Vagina (tissue), 2 donors: ENCODE measurements at regions of chr2 and their contacts with region 1.

Region 1: DNA sequence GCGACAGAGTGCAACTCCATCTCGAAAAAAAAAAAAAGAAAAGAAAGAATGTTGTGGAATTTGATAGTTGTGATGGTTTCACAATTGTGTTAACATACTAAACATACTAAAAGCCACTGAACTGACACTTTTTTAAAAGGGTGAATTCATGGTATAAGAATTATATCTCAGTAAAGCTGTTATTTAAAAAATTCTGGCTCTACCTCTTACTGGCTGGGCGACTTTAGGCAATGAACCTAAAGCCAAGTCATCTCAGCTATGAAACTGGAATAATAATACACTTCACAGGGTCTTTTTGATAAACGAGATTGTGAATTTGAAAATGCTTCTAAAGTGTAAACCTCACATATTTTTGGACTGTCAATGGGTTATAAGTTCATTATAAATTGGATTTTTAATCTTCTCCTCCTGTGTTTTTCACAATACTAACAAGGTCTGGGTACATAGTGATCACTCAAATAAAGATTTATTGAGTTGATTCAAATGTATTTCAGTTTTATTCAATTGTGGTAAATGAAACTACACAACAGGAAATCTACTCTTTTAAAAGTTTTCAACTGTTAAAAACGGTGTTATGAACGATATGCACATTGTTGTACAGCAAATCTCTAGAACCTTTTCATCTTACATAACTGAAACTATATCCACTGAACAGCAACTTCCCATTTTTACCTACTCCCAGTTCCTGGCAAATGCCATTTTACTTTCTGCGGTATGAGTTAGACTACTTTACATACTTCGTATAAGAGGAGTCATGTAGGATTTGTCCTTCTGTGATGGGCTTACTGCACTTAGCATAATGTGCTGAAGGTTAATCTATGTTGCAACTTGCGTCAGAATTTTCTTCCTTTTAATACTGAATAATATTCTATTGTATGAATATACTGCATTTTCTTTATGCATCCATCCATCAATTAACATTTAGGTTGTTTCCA is 43.0 kb upstream of the GTF2A1L start:
- DNase-seq: no peak
- H3K4me3 ChIP-seq: no peak overlapping the region
- H3K27ac ChIP-seq: no peak overlapping the region
- H3K4me1 ChIP-seq: peaks cover 4% of the 10 kb centered on the region
- H3K27me3 ChIP-seq: no peaks in the 10 kb centered on the region
- CTCF ChIP-seq: no peak
- POLR2A ChIP-seq: no peak

Region 2: DNA sequence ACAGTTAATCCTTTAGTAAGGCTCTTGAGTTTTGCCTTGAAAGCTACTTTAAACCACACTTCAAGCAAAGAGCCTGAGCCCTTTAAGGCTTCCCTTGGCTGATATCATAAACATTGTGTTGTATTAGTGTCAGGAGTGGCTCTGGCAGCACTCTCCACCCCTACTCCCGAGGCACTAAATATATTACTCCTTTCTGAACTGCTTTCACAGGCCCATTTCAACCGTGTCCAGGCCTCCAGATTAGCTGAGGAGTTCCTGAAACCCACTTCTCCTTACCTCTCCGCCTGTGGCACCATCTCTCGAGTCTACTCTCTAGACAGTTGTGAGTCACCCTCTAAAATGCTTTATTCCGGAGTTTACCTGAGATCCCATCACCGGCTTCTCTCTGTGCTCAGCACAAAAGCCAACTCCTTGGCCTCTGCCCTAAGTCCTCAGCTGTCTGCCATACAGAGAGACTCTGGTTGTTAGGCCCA is 59.1 kb before region 1 on chr2:
- intact Hi-C with region 1: loop called (anchors 5 kb)
- DNase-seq: no peak
- H3K4me3 ChIP-seq: no peak overlapping the region
- H3K27ac ChIP-seq: no peak overlapping the region
- H3K4me1 ChIP-seq: peaks cover 5% of the 10 kb centered on the region
- H3K27me3 ChIP-seq: no peaks in the 10 kb centered on the region
- CTCF ChIP-seq: no peak
- POLR2A ChIP-seq: no peak

Region 3: GRCh38 chr2:48674933-48675332 is 100.3 kb after region 1 on chr2:
- intact Hi-C with region 1: no loop called
- DNase-seq: no peak
- H3K4me3 ChIP-seq: no peak overlapping the region
- H3K27ac ChIP-seq: no peak overlapping the region
- H3K4me1 ChIP-seq: no peaks in the 10 kb centered on the region
- H3K27me3 ChIP-seq: no peaks in the 10 kb centered on the region
- CTCF ChIP-seq: no peak
- POLR2A ChIP-seq: no peak